ENCODE measurements at regions of chr16 and their contacts with region 1.

Region 1: DNA sequence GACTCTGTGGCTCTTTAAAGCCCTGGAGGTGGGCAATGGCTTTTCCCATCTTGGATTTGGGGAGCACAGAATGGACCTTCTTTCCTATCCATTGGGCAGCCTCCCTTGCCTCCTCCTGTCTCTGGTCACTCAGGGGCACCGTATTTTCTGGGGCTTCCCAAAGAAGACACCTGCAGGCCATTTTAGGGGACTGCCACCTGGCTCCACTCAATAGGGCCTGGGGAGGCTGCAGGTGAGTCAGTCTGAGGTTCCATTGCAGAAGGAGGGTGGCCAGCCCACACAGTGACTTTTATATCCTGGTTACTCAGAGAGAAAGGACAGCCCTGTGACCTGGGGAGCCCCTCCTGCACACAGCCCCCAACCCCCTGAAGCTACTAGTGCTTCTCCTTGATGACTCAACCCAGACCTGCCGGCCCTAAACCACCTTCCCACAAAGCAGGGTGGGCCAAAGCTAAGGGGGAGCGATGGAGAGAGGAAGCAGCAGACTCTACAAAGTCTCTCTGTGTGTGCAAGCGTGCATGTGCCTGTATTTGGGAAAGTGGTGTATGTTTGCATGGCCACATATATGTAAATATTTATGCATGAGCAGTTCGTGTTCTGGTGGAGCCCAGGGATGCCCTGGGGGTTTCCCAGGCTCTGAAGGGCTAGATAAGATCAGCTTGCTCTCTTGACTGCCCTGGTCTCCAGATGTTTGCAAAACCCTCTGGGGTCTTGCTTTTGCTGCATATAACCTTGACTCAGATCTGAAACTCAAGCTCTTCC is 5.0 kb downstream of the CX3CL1 start:
- DNase-seq: peak; percentile 59
- H3K4me3 Mint-ChIP-seq: no peak overlapping the region
- H3K27ac Mint-ChIP-seq: peak overlapping the region; percentile 29
- H3K4me1 Mint-ChIP-seq: peaks cover 19% of the 10 kb centered on the region
- H3K27me3 Mint-ChIP-seq: peaks cover 2% of the 10 kb centered on the region

Region 2: DNA sequence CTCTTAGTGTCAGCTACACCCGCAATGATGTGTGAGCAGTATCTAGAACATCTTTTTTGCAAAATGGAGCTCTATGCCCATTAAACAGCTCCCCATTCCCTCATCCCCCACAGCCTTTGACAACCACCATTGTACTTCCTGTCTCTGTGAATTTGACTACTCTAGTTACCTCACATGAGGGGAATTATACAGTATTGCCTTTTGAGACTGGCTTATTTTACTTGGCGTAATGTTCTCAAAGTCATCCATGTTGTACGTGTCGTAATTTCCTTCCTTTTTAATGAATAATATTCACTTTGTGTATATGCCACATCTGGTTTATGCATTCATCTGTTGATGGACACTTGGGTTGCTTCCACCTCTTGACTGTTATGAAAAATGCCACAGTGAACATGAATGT is 41.9 kb before region 1 on chr16:
- intact Hi-C with region 1: loop called (anchors 5 kb)
- DNase-seq: no peak
- H3K4me3 Mint-ChIP-seq: no peak overlapping the region
- H3K27ac Mint-ChIP-seq: no peak overlapping the region
- H3K4me1 Mint-ChIP-seq: peaks cover 10% of the 10 kb centered on the region
- H3K27me3 Mint-ChIP-seq: peaks cover 34% of the 10 kb centered on the region

Region 3: GRCh38 chr16:57358527-57359095 is 18.6 kb before region 1 on chr16 and contains the start of gene CCL22:
- intact Hi-C with region 1: loop called (anchors 2 kb)
- DNase-seq: no peak
- H3K4me3 Mint-ChIP-seq: no peak within 1 kb of the TSS
- H3K27ac Mint-ChIP-seq: no peak within 1 kb of the TSS
- H3K4me1 Mint-ChIP-seq: peaks cover 7% of the 10 kb centered on the region
- H3K27me3 Mint-ChIP-seq: peaks cover 6% of the 10 kb centered on the region
- total RNA-seq, gene CCL22: 14.1 and 14.6 TPM in 2 replicates

Region 4: DNA sequence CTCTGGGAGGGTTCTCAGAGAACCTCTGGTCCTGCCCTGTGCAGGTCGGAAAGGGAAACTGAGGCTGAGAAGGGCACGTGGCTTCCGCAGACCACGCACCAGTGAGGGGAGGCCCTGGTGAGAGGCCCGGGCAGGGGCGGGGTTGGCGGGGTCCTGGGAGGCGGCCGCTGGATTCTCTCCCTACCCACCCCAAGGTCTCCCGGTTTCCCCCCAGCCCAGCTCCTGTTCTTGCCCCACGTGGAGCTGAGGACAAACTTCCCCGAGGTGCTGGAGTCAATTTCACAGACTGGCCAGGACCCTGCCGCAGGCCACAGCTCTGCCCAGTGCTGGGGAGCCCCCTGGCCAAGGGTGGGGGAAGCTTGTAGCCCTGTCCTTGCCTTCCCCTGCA is 38.9 kb after region 1 on chr16:
- intact Hi-C with region 1: loop called (anchors 5 kb)
- DNase-seq: no peak
- H3K4me3 Mint-ChIP-seq: no peak overlapping the region
- H3K27ac Mint-ChIP-seq: no peak overlapping the region
- H3K4me1 Mint-ChIP-seq: peaks cover 15% of the 10 kb centered on the region
- H3K27me3 Mint-ChIP-seq: peaks cover 2% of the 10 kb centered on the region

Measured in activated CD4-positive, alpha-beta T cell treated with anti-CD3 and anti-CD28 coated beads, Interleukin-2, amount 10 ng/mL, durations not matched to agents 24 days and 14 days (primary cell).